Activated naive CD4-positive, alpha-beta T cell treated with anti-CD3 and anti-CD28 coated beads for 36 hours (primary cell): ENCODE measurements at regions of chr7 and their contacts with region 1.

Region 1: GRCh38 chr7:23597094-23598091 is at the start of gene CCDC126:
- DNase-seq: peak; percentile 83
- H3K4me3 Mint-ChIP-seq: peak within 1 kb of the TSS; percentile 83
- H3K27ac Mint-ChIP-seq: peak within 1 kb of the TSS; percentile 20
- H3K4me1 Mint-ChIP-seq: peaks cover 63% of the 10 kb centered on the region
- H3K27me3 Mint-ChIP-seq: no peaks in the 10 kb centered on the region
- total RNA-seq, gene CCDC126: 5.3 to 5.7 TPM

Region 2: DNA sequence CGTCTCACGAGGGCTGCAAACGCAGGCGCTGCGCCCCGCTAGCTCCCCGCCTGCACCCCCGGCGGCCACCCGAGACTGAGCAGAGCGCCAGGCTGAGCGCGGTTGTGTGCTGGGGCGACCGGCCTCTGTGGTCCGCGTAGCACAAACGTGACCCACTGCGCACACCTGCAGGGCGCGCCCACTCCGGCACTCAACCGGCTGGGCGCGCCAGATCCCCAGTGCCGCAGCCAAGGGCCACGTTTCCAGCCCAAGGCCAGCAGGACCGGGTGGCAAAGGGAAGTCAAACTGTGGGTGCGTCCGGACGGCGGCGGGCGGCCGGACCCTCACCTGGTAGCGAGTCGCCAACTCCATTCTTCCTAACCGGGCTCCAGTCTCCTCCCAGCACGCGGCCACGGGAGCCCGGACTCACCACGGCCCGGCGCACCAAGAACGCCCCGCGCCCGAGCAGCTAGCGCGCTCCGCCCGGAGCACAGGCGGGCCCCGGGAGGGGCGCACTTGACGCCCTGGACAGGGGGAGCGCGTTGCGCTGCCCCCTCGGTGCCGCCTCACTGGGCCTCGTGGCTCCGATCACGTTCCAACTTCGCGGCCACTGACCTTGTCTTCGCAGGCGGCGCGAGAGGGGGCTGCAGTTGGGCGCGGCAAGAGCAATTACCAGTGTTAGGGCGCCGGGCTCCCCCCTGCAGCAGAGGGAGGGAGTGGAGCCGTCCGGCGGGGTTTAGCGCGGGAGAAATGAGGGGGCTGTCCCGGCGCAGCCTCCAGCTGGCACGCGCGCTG is 1651.8 kb before region 1 on chr7 and contains the start of gene CDCA7L:
- CTCF ChIA-PET with region 1: no interaction called
- intact Hi-C with region 1: loop called (anchors 10 kb)
- DNase-seq: peak; percentile 85
- H3K4me3 Mint-ChIP-seq: peak within 1 kb of the TSS; percentile 86
- H3K27ac Mint-ChIP-seq: peak within 1 kb of the TSS; percentile 84
- H3K4me1 Mint-ChIP-seq: peaks cover 63% of the 10 kb centered on the region
- H3K27me3 Mint-ChIP-seq: no peaks in the 10 kb centered on the region
- total RNA-seq, gene CDCA7L: 101 to 103 TPM

Region 3: DNA sequence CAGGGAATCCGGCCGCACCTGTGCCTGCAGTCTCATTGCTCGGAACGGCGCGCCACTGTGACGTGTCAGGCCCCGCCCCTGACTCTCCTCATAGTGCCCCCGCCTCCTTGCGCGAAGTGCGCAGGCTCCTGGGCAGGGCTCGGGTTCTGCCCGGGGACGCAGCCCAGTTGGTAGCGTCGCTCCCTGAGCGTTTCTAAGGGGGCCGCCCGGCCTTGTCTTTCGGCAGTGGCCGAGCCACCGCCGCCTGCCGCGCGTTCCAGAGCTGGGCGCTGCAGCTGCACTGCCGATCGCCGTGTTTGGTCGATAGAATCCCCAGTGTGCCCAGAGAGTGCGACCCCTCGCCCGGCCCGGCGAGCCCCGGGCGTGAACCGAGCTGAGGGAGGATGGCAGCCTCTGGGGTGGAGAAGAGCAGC is 491.7 kb before region 1 on chr7 and contains the start of gene KLHL7:
- CTCF ChIA-PET with region 1: no interaction called
- intact Hi-C with region 1: loop called (anchors 10 kb)
- DNase-seq: peak; percentile 98
- H3K4me3 Mint-ChIP-seq: peak within 1 kb of the TSS; percentile 93
- H3K27ac Mint-ChIP-seq: peak within 1 kb of the TSS; percentile 89
- H3K4me1 Mint-ChIP-seq: peaks cover 35% of the 10 kb centered on the region
- H3K27me3 Mint-ChIP-seq: no peaks in the 10 kb centered on the region
- total RNA-seq, gene KLHL7: 24.0 to 26.4 TPM

Region 4: GRCh38 chr7:23347682-23348180 is 249.7 kb before region 1 on chr7:
- CTCF ChIA-PET with region 1: no interaction called
- intact Hi-C with region 1: loop called (anchors 1 kb)
- DNase-seq: peak; percentile 20
- H3K4me3 Mint-ChIP-seq: peak overlapping the region; percentile 8
- H3K27ac Mint-ChIP-seq: peak overlapping the region; percentile 64
- H3K4me1 Mint-ChIP-seq: peaks cover 32% of the 10 kb centered on the region
- H3K27me3 Mint-ChIP-seq: no peaks in the 10 kb centered on the region

Region 5: DNA sequence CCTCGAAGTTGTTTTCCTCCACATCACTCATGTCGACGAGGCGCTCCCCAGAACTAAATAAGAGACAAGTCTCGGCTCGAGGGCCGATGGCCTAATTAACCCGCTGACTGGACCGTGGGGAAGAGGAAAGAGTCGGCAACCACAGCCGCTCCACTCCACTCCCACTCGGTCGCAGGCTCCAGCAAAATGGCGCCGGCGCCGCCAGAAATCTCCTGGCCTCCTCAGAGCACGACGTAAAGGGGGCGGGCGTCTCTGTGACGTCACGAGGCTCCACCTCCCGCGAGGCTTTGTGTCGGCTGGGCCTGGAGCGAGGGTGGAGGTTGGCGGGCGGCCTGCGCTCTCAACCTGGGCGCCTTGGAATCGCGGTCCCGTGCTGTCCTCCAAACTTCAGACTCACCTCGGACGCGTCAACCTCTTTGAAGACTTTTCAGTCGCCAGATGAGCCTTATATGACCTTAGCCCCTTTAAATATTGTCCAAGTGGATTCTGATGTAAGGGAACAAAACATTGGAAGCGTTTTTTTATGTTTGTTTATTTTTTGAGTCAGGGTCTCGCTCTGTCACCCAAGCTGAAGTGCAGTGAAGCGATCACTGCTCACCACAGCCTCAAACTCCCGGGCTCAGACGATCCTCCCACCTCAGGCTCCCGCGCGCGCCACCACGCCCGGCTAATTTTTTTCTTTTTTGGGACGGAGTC is 65.5 kb before region 1 on chr7 and contains the start of gene TRA2A:
- CTCF ChIA-PET with region 1: no interaction called
- intact Hi-C with region 1: loop called (anchors 1 kb)
- DNase-seq: peak; percentile 99
- H3K4me3 Mint-ChIP-seq: peak within 1 kb of the TSS; percentile 99
- H3K27ac Mint-ChIP-seq: peak within 1 kb of the TSS; percentile 100
- H3K4me1 Mint-ChIP-seq: peaks cover 43% of the 10 kb centered on the region
- H3K27me3 Mint-ChIP-seq: no peaks in the 10 kb centered on the region
- total RNA-seq, gene TRA2A: 77.8 to 79.0 TPM

Region 6: DNA sequence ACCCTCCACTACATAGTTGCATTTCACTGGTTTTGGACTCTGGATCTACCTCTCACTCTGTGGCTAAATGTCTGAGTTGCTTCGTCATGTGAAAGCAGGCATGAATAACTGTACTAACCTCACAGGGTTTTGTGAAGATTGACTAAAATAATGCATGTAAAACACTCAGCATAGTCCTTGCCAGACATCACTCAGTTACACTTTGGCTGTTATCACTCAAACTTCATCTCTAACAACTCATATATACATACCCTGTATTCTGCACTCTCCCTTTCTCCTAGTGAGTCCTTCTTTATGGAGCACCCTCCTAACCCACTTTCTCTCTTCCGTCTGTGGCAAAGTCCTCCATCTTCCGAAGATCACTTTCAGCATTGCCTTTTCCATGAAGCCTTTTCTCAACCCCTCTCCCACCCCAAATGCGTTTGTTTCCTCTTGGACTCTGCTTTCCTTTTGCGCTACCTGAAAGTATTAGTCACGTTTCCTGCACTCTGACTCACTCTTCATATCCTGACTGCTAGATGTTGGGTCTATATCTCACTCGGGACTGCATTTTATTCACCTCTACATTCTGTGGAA is 1310.0 kb after region 1 on chr7:
- CTCF ChIA-PET with region 1: no interaction called
- intact Hi-C with region 1: loop called (anchors 10 kb)
- DNase-seq: peak; percentile 48
- H3K4me3 Mint-ChIP-seq: no peak overlapping the region
- H3K27ac Mint-ChIP-seq: no peak overlapping the region
- H3K4me1 Mint-ChIP-seq: peaks cover 34% of the 10 kb centered on the region
- H3K27me3 Mint-ChIP-seq: no peaks in the 10 kb centered on the region